AG04450 (cell line): ENCODE measurements at regions of chr17 and their contacts with region 1.

Region 1: DNA sequence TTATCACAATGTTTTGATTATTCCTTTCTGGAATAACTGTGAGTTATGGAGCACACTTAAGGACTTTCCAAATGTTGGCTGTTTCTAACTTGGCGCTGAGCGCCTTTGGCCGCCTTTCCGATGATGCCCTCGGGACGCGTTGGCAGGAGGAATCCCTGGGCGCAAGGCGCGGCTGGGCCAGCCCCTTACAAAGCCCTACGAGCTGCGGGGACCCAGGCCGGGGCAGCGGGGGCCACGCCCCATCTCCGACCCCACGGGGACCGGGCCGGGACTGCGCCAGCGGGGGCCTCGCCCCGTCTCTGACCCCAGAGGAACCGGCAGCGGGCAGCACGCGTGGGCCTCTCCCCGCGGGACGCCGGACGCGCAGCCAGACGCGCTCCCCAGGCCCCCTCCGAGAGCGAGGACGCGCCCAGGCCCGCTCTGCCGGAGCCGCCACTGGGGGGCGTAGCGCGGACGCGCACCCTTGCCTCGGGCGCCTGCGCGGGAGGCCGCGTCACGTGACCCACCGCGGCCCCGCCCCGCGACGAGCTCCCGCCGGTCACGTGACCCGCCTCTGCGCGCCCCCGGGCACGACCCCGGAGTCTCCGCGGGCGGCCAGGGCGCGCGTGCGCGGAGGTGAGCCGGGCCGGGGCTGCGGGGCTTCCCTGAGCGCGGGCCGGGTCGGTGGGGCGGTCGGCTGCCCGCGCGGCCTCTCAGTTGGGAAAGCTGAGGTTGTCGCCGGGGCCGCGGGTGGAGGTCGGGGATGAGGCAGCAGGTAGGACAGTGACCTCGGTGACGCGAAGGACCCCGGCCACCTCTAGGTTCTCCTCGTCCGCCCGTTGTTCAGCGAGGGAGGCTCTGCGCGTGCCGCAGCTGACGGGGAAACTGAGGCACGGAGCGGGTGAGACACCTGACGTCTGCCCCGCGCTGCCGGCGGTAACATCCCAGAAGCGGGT is at the start of gene GAA:
- DNase-seq: no peak
- H3K4me3 ChIP-seq: peak within 1 kb of the TSS; percentile 98
- H3K27ac ChIP-seq: no peak within 1 kb of the TSS
- H3K27me3 ChIP-seq: no peaks in the 10 kb centered on the region
- CTCF ChIP-seq: peak; percentile 56
- polyA plus RNA-seq, gene GAA: 3.8 and 6.0 TPM in 2 replicates

Region 2: GRCh38 chr17:79810130-79811010 is 290.9 kb before region 1 on chr17:
- CTCF ChIA-PET with region 1: no interaction called
- POLR2A ChIA-PET with region 1: no interaction called
- DNase-seq: no peak
- H3K4me3 ChIP-seq: peak overlapping the region; percentile 27
- H3K27ac ChIP-seq: no peak overlapping the region
- H3K27me3 ChIP-seq: peaks cover 87% of the 10 kb centered on the region
- CTCF ChIP-seq: no peak

Region 3: GRCh38 chr17:80082403-80083135 is 18.7 kb before region 1 on chr17:
- CTCF ChIA-PET with region 1: interaction called, 26 read pairs
- POLR2A ChIA-PET with region 1: no interaction called
- DNase-seq: peak; percentile 51
- H3K4me3 ChIP-seq: no peak overlapping the region
- H3K27ac ChIP-seq: no peak overlapping the region
- H3K27me3 ChIP-seq: peaks cover 9% of the 10 kb centered on the region
- CTCF ChIP-seq: peak; percentile 76

Region 4: GRCh38 chr17:80114758-80115157 is 13.5 kb after region 1 on chr17:
- CTCF ChIA-PET with region 1: interaction called, 18 read pairs
- POLR2A ChIA-PET with region 1: interaction called, 4 read pairs
- DNase-seq: no peak
- H3K4me3 ChIP-seq: no peak overlapping the region
- H3K27ac ChIP-seq: no peak overlapping the region
- H3K27me3 ChIP-seq: no peaks in the 10 kb centered on the region
- CTCF ChIP-seq: no peak

Region 5: GRCh38 chr17:80146121-80147034 is 45.1 kb after region 1 on chr17:
- CTCF ChIA-PET with region 1: interaction called, 14 read pairs
- POLR2A ChIA-PET with region 1: interaction called, 20 read pairs
- DNase-seq: no peak
- H3K4me3 ChIP-seq: peak overlapping the region; percentile 96
- H3K27ac ChIP-seq: peak overlapping the region; percentile 2
- H3K27me3 ChIP-seq: no peaks in the 10 kb centered on the region
- CTCF ChIP-seq: no peak